ENCODE measurements at regions of chrX and their contacts with region 1.

Region 1: GRCh38 chrX:150772150-150772970 is 79.2 kb downstream of the MTMR1 start:
- DNase-seq: peak; percentile 45 to 71 (median 67)
- H3K4me3 ChIP-seq: no peak overlapping the region
- H3K27ac ChIP-seq: no peak overlapping the region
- H3K4me1 ChIP-seq: no peaks in the 10 kb centered on the region
- H3K27me3 ChIP-seq: no peaks in the 10 kb centered on the region

Region 2: DNA sequence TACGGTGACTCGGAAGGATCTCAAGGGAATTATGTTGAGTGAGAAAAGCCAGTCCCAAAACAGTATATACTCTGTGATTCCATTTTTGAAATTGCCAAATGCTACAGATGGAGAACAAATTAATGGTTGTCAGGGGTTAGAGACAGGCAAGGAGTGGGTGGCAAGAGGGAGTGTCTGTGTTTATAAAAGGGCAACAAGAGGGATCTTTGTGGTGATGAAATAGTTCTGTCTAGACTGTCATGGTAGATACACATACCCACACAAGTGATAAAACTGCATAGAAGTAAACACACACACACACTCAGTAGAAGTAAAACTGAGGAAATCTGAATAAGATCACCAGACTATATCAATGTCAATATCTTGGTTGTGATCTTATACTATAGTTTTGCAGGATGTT is 33.4 kb after region 1 on chrX:
- CTCF ChIA-PET with region 1: no interaction called
- POLR2A ChIA-PET with region 1: no interaction called
- DNase-seq: no peak
- H3K4me3 ChIP-seq: no peak overlapping the region
- H3K27ac ChIP-seq: no peak overlapping the region
- H3K4me1 ChIP-seq: no peaks in the 10 kb centered on the region
- H3K27me3 ChIP-seq: no peaks in the 10 kb centered on the region

Region 3: GRCh38 chrX:151082076-151082948 is 310.0 kb after region 1 on chrX:
- CTCF ChIA-PET with region 1: interaction called, 71 read pairs
- POLR2A ChIA-PET with region 1: no interaction called
- DNase-seq: peak; percentile 24 to 70 (median 68)
- H3K4me3 ChIP-seq: peak overlapping the region in 2 of 7 experiments; percentile 2 to 48
- H3K27ac ChIP-seq: no peak overlapping the region
- H3K4me1 ChIP-seq: peaks cover 0 to 5% (median 0%) of the 10 kb centered on the region in 4 experiments
- H3K27me3 ChIP-seq: peaks cover 0 to 24% (median 7%) of the 10 kb centered on the region in 5 experiments

Measured in common myeloid progenitor, CD34-positive (primary cell).